GM10248 (cell line): ENCODE measurements at regions of chr18 and their contacts with region 1.

Region 1: DNA sequence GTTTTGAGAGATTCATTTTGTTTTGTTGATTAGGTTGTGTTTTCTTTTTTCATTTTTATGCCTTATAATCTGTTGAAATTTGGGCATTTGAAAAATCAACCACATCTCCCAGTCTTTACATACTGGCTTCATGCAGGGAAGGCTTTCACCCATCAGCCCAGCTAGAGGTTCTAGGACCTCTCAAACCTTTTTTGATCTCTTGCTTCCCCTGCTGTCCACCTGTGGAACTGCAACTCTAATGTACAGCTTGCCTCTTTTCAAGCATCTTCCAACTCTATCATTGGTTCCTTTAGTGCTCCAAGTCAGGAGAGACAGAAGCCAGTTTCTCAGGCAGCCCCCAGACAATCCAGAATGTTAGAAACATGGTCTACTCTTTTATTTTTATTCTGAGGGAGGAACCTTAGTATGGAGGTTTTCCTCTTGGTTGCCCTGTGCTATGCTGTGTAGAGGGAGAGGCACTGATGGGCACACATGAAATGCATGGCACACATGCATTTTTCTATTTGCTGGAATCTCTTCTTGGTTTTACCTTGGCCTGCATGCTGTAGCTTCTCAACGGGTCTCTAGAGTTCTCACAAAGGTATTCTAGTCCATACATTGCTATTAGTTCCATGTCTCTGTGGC is 107.2 kb upstream of the L3MBTL4 start:
- DNase-seq: peak; percentile 48
- CTCF ChIP-seq: peak; percentile 95

Region 2: GRCh38 chr18:5868218-5869115 is 653.4 kb before region 1 on chr18:
- CTCF ChIA-PET with region 1: interaction called, 80 read pairs
- POLR2A ChIA-PET with region 1: no interaction called
- DNase-seq: peak; percentile 45
- CTCF ChIP-seq: peak; percentile 80

Region 3: DNA sequence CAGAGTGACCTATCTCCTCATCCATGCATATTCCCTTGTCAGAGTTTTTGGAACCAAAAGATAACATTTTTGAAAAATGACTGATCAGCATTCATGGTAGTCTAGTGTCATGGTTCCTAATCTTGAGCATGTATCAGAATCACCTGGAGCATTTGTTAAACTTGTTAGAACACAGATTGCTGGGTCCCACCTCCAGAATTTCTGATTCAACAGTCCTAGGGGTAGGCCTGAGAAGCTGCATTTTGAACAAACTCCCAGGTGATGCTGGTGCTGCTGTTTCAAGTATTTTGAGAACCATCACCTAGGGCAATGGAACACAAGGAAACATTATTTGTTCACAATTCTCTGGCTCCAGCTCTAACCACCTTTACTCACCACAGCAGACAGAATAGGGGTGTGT is 647.6 kb before region 1 on chr18:
- CTCF ChIA-PET with region 1: interaction called, 80 read pairs
- POLR2A ChIA-PET with region 1: no interaction called
- DNase-seq: no peak
- CTCF ChIP-seq: no peak

Region 4: GRCh38 chr18:5879479-5879882 is 642.4 kb before region 1 on chr18:
- CTCF ChIA-PET with region 1: interaction called, 42 read pairs
- POLR2A ChIA-PET with region 1: no interaction called
- DNase-seq: no peak
- CTCF ChIP-seq: peak; percentile 65

Region 5: DNA sequence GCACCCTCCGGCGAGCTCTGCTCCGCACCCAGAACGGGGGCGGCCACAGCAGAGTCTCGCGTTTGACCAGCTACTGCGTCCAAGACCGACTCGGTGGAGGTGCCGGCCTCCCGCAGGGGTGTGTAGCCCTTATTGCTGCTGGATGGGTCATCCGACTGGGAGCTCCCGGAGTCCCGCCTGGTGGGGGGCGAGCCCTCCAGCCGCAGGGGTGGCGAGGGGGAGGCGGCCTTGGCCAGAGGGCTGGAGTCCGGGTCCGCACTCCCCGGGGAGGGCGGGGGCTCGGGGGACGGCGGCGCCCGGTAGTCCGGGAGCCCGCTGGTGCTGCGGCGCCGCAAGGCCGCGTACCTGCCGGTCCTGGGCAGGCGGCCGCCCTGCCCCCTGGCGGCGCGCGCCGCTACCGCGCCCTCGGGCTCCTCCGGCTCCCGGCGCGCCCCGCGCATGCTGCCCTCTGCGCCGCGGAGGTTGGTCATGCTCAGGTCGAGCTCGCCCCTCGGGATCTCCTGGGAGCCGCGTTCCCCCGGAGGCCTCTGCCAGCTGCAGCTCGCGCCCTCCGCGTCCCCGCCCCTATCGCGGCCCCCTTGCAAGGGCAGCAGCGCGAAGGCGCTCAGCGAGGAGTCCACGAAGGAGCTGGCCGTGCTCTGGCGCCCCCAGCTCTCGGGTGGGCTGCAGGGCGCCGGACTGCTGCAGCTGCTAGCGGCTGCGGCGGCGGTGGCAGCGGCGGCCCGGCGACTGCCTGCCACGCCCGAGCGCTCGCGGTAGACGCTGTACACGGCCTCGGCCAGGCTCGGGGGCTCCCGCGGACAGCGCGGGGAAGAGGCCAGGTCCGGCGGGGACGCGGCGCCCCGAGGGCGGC is 631.4 kb before region 1 on chr18:
- CTCF ChIA-PET with region 1: interaction called, 23 read pairs
- POLR2A ChIA-PET with region 1: no interaction called
- DNase-seq: peak; percentile 82
- CTCF ChIP-seq: peak; percentile 76

Region 6: GRCh38 chr18:6509832-6510231 is 12.1 kb before region 1 on chr18:
- CTCF ChIA-PET with region 1: interaction called, 21 read pairs
- POLR2A ChIA-PET with region 1: no interaction called
- DNase-seq: no peak
- CTCF ChIP-seq: no peak

Region 7: DNA sequence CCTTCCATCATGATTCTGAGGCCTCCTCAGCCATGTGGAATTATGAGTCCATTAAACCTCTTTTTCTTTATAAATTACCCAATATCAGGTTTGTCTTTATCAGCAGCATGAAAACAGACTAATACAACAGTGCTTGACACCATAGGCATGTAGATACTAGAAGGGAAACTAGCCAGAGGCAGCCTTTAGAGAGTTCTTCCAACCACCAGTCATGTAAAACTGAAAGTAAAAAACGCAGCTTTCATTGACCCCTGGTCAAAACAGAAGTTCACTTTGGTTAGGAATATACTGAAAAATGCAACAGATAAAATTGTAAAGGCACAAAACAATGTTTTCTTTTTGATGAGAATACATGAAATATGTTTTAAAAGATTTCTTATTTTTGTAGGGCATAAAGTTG is 15.6 kb after region 1 on chr18:
- CTCF ChIA-PET with region 1: interaction called, 22 read pairs
- POLR2A ChIA-PET with region 1: no interaction called
- DNase-seq: no peak
- CTCF ChIP-seq: no peak